BJ (cell line): ENCODE measurements at regions of chr6 and their contacts with region 1.

Region 1: GRCh38 chr6:52598123-52598823 is 21.4 kb upstream of the TRAM2 start:
- DNase-seq: no peak
- H3K4me3 ChIP-seq: no peak overlapping the region
- H3K27me3 ChIP-seq: no peaks in the 10 kb centered on the region
- CTCF ChIP-seq: peak; percentile 82

Region 2: DNA sequence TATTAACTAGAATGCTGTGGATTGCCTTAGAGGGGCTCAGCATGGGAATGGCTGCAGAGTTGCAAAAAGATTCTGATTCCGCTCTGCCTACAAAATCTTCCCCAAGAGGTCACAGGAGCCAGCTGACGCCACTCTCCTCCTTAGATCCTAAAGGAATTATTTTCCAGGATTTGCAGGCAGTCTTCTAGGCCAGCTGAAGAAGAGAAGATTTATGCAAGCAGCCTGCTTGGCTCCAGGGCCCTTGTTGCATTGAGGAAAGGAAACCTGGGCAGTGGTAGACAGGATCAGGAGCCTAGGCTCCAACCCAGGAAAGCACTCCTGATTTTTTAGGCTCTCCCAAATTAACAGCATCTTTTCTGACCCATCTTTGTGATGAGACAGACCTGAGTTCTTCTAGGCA is 756.6 kb before region 1 on chr6:
- CTCF ChIA-PET with region 1: no interaction called
- POLR2A ChIA-PET with region 1: no interaction called
- DNase-seq: no peak
- H3K4me3 ChIP-seq: no peak overlapping the region
- H3K27me3 ChIP-seq: no peaks in the 10 kb centered on the region
- CTCF ChIP-seq: no peak

Region 3: GRCh38 chr6:52407467-52407866 is 190.8 kb before region 1 on chr6:
- CTCF ChIA-PET with region 1: interaction called, 4 read pairs
- POLR2A ChIA-PET with region 1: interaction called, 18 read pairs
- DNase-seq: no peak
- H3K4me3 ChIP-seq: no peak overlapping the region
- H3K27me3 ChIP-seq: no peaks in the 10 kb centered on the region
- CTCF ChIP-seq: peak; percentile 56

Region 4: DNA sequence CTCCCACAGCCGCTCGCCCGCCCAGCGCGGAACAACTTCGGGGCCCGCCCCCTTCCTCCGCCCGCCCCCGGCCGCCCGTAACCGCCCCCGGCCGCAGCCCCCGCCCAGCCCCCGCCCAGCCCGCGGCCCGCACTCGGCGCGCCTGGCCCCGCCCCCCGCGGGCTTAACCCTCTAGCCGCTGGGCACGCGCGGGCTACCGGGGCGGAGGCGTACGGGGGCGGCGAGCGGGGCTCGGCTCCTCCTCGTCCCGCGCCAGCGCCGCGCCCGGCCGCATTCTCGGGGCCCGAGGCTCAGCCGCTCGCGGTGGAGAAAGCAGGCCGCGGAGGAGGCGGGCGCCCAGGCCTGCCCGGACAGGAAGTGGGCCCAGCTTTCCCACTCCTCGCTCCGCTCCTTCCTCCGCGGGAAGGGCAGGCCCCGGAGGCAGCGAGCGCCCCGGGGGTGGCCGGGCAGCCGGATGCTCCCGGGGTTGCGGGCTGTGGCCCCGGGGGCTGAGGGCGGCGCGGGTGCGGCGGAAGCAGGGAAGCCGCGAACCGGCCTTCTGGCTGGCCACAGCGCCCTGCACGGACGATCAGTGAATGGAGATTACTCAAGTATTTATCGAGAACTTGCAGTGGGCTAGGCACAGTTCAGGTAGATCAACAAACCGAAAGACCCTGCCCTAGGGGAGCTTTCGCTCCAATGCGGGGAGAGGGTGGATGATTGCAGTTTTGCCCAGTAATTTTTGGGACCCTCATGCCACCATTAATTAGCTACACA is 21.1 kb before region 1 on chr6 and contains the start of gene TRAM2:
- CTCF ChIA-PET with region 1: interaction called, 68 read pairs
- POLR2A ChIA-PET with region 1: no interaction called
- DNase-seq: no peak
- H3K4me3 ChIP-seq: peak within 1 kb of the TSS; percentile 91
- H3K27me3 ChIP-seq: no peaks in the 10 kb centered on the region
- CTCF ChIP-seq: 0 out of 2 replicates have a peak, but pooled peaks have one; percentile 9
- polyA plus RNA-seq, gene TRAM2: 134 and 146 TPM in 2 replicates

Region 5: DNA sequence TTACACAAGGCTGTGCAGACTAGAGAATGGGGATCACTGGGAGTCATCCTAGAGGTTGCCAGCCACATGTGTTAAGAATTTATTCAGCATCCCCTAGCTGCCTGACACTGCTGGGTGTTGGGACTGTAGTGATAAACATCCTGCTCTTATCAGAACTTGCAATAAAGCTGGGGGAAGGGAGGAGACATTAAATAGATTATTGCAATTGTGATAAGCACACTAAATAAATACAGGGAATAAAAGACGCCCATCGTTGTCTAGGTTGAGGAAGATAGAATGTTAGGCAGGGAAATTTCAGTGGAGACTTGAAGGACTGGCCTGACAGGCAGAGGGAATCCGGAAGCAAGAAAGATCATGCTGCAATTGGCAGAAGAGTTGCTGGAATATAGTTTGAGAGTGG is 11.7 kb after region 1 on chr6:
- CTCF ChIA-PET with region 1: interaction called, 53 read pairs
- POLR2A ChIA-PET with region 1: no interaction called
- DNase-seq: no peak
- H3K4me3 ChIP-seq: no peak overlapping the region
- H3K27me3 ChIP-seq: no peaks in the 10 kb centered on the region
- CTCF ChIP-seq: no peak

Region 6: GRCh38 chr6:52663120-52663935 is 65.1 kb after region 1 on chr6:
- CTCF ChIA-PET with region 1: interaction called, 27 read pairs
- POLR2A ChIA-PET with region 1: no interaction called
- DNase-seq: peak; percentile 29
- H3K4me3 ChIP-seq: peak overlapping the region; percentile 82
- H3K27me3 ChIP-seq: no peaks in the 10 kb centered on the region
- CTCF ChIP-seq: peak; percentile 76